SK-N-SH (cell line): ENCODE measurements at regions of chr1 and their contacts with region 1.

Region 1: GRCh38 chr1:200279810-200280411 is 129.9 kb downstream of the ZNF281 start:
- DNase-seq: peak; percentile 62
- H3K4me3 ChIP-seq: no peak overlapping the region
- H3K27ac ChIP-seq: no peak overlapping the region
- H3K4me1 ChIP-seq: peaks cover 0 to 4% of the 10 kb centered on the region in 2 experiments; a peak in 1 of 4 replicates
- H3K27me3 ChIP-seq: no peaks in the 10 kb centered on the region
- CTCF ChIP-seq: peak; percentile 74
- EP300 ChIP-seq: no peak
- RAD21 ChIP-seq: peak; percentile 74

Region 2: DNA sequence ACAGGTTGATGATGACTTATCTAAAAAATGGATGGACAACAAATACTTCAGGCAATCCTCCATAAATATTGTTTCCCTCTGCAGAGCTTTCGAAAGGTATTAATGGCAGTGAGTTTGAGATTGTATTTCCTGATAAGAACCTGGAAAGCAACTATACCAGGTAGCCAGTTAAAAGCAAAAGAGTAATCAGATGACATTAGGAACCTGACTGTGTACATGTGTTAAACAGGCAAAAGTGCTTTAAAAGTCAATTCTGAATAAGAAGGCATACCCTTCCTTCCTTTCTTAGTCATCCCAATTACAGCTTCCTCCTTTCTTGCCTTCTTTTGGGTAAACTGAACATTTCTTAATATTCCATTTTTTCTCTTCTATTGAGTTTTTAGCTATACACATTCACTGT is 14.9 kb before region 1 on chr1:
- CTCF ChIA-PET with region 1: interaction called, 10 read pairs
- POLR2A ChIA-PET with region 1: no interaction called
- DNase-seq: no peak
- H3K4me3 ChIP-seq: no peak overlapping the region
- H3K27ac ChIP-seq: no peak overlapping the region
- H3K4me1 ChIP-seq: no peaks in the 10 kb centered on the region
- H3K27me3 ChIP-seq: no peaks in the 10 kb centered on the region
- CTCF ChIP-seq: no peak
- EP300 ChIP-seq: no peak
- RAD21 ChIP-seq: no peak

Region 3: GRCh38 chr1:200306944-200307754 is 27.2 kb after region 1 on chr1:
- CTCF ChIA-PET with region 1: interaction called, 12 read pairs
- POLR2A ChIA-PET with region 1: no interaction called
- DNase-seq: peak; percentile 61
- H3K4me3 ChIP-seq: no peak overlapping the region
- H3K27ac ChIP-seq: no peak overlapping the region
- H3K4me1 ChIP-seq: peaks cover 0 to 3% of the 10 kb centered on the region in 2 experiments; a peak in 1 of 4 replicates
- H3K27me3 ChIP-seq: no peaks in the 10 kb centered on the region
- CTCF ChIP-seq: peak; percentile 90
- EP300 ChIP-seq: no peak
- RAD21 ChIP-seq: peak; percentile 63

Region 4: DNA sequence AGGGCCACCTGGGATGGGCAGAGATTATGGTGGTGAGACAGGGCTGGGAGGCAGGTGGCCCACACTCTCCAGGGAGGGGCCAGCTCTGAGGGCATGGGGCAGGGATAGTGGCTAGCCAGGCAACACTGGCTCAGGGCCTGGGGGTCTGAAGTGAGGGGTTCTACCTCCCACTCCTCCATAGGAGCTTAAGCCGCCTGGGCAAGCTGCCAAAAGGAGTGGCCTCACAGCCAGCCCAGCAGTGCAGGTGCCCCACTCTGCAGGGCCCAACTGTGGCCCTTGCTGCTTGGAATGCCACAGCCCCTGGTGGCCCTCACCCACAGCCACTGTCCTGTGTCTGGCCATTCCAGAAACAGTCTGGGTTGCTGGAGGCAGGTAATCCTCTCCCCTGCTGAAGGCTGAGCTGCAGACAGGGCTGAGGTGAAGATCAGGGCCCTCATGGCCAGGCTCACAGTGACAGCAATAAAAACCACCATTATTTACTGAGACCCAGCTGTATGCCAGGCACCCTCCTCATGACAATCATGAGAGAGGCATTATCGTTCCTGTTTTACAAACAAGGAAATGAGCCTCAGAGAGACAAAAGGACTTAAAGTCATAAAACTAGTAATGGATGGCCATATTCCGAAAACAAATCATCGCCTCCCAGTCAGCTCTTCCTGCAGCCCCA is 712.6 kb after region 1 on chr1:
- CTCF ChIA-PET with region 1: no interaction called
- POLR2A ChIA-PET with region 1: no interaction called
- DNase-seq: no peak
- H3K4me3 ChIP-seq: no peak overlapping the region
- H3K27ac ChIP-seq: no peak overlapping the region
- H3K4me1 ChIP-seq: no peaks in the 10 kb centered on the region; a peak in 1 of 4 replicates
- H3K27me3 ChIP-seq: no peaks in the 10 kb centered on the region
- CTCF ChIP-seq: no peak
- EP300 ChIP-seq: no peak
- RAD21 ChIP-seq: no peak